MCF 10A (cell line): ENCODE measurements at regions of chr19 and their contacts with region 1.

Region 1: DNA sequence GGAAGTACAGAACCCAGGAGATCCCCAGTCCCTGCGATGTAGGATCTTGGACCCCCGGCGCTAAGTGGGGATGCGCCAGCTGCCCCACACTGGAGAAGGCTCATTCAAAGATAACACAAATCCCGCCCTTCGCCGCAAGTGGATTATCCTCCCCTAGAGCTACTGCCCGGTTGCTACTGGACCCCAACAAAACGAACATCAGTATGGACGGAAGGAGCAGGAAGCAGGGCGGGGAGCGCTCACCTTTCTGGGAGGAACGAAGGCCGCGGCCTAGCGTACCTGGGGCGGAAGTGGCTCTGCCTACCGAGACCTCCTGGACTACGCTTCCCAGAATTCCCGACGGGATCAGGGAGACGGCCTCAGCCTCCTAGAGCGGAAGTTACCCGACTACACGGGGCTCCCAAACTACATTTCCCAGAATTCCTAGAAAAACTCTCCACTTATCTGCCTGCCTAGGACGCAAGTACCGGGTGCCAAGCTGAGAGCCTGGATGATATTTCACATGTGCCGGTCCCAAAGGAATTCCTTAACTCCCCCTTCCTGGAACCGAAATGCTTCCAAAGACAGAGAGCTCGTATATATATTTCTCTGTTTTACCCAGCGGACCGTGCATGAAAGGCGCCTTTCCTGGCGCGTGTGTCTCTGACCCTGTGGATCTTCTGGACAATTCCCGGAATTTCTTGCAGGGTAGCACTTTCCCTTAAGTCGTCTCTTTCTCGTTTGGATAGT is at the start of gene ZNF112:
- DNase-seq: peak; percentile 97
- H3K4me3 Mint-ChIP-seq: peak within 1 kb of the TSS; percentile 90
- H3K27ac Mint-ChIP-seq: peak within 1 kb of the TSS; percentile 93
- H3K4me1 Mint-ChIP-seq: no peaks in the 10 kb centered on the region
- H3K27me3 Mint-ChIP-seq: no peaks in the 10 kb centered on the region
- CTCF ChIP-seq: no peak
- total RNA-seq, gene ZNF112: 5.4 and 5.7 TPM in 2 replicates

Region 2: DNA sequence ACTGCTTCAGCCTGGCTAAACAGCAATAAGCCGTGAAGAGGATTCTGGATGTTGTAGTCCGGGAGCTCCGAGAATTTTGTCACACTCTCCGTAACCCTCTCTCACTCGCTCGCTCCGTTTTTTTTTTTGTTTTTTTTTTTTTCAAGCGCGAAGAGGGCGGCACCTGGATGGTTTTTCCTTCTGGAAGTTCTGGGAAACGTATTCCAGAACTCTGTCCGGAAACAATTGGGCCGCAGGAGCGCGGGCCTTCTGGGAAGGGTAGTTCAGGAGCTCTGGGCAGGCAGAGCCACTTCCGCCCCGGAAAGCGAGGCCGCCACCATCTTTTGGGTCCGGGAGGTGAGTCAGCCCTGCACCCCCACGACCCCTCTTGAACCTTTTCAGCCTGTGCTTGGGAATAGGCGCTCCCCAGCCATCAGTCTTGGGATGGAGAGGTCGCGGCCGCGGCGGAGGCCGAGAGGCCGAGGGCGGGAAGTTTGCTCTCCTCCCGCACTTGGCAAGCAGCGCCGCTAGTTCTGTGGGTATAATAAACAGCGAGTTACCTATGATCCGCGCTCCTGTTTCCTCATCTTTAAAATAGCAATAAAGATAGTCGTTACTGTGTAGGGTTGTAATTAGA is 144.2 kb before region 1 on chr19 and contains the start of gene ZNF227:
- CTCF ChIA-PET with region 1: no interaction called
- POLR2A ChIA-PET with region 1: interaction called, 6 read pairs
- intact Hi-C with region 1: loop called (anchors 10 kb)
- DNase-seq: peak; percentile 96
- H3K4me3 Mint-ChIP-seq: peak within 1 kb of the TSS; percentile 94
- H3K27ac Mint-ChIP-seq: peak within 1 kb of the TSS; percentile 92
- H3K4me1 Mint-ChIP-seq: peaks cover 9% of the 10 kb centered on the region
- H3K27me3 Mint-ChIP-seq: no peaks in the 10 kb centered on the region
- CTCF ChIP-seq: no peak
- total RNA-seq, gene ZNF227: 22.6 and 29.0 TPM in 2 replicates